HEK293 (cell line): ENCODE measurements at regions of chr15 and their contacts with region 1.

Region 1: GRCh38 chr15:79923515-79924395 is 26.9 kb upstream of the MTHFS start:
- H3K4me3 ChIP-seq: peak overlapping the region; percentile 99
- H3K27ac ChIP-seq: peak overlapping the region; percentile 97
- H3K4me1 ChIP-seq: no peaks in the 10 kb centered on the region
- CTCF ChIP-seq: no peak

Region 2: DNA sequence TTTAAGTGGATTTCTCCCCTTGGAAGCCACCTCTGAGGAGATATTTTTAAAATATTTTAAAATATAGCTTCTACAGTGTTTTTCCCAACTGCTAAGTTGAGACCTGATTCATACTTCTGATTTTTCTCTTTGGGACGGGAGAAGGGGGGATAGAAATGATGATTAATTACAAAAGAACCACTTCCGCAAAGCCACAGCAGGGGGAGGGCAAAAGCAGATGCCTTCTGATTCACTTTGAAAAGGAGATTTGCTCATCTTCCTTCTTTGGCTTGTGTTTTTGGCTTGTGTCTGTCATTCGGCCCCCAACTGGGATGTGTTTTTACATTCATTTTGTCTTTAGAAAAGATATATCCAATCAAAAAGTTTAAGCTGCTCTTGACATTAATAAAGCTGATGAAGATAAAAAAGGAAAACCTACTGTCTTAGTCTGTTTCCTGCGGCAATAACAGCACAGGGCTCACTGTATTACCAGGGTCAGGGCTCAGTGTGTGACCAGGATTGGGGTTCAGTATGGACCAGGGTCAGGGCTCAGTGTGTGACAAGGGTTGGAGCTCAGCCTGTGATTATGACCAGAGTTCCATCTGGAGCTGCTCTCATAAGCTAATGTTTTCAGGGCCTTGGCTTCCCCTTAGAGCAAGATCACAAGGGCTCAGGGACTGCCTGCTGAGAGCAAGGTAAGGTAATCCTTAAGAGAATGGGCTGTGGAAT is 250.2 kb before region 1 on chr15:
- CTCF ChIA-PET with region 1: no interaction called
- POLR2A ChIA-PET with region 1: no interaction called
- H3K4me3 ChIP-seq: no peak overlapping the region
- H3K27ac ChIP-seq: no peak overlapping the region
- H3K4me1 ChIP-seq: no peaks in the 10 kb centered on the region
- CTCF ChIP-seq: no peak

Region 3: DNA sequence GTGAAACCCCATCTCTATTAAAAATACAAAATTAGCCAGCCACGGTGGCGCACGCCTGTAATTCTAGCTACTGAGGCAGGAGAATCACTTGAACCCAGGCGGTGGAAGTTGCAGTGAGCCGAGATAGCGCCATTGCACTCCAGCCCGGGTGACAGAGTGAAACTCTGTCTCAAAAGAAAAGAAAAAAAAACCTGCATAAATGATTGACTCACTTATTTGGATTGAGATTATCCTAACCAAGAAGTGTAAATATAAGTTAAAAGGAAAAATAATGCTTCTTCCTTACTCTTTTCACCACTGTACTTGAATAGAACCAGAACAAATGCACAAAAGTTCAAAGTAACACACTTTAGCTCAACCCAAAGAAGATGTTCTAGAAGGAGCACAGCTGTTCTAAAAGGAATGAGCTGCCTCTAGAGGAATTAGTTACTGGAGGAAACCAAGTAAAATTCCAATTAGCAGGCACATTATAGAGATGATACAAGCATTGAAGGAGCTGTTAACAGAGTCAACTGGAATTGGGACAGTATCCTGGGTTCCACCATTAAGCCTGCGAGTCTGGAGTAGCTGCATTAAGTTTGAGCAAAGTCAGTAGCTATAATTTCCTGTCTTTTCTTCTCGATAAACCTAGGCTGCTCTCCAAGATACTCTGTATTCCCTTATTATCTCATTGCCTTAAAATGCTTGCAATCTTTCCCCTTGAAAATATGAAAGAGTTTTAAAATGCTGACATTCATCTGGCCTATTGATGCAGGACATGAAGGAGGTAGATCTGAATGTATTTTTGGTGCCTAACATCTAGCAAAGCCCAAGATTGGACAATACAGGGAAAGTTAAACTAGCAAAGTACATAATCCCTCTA is 36.5 kb before region 1 on chr15:
- CTCF ChIA-PET with region 1: interaction called, 3 read pairs
- POLR2A ChIA-PET with region 1: interaction called, 10 read pairs
- H3K4me3 ChIP-seq: no peak overlapping the region
- H3K27ac ChIP-seq: no peak overlapping the region
- H3K4me1 ChIP-seq: peaks cover 3% of the 10 kb centered on the region; the same call in 1 of the 2 replicates
- CTCF ChIP-seq: no peak

Region 4: GRCh38 chr15:79896637-79897379 is 26.9 kb before region 1 on chr15 and contains the start of gene MTHFS:
- CTCF ChIA-PET with region 1: interaction called, 3 read pairs
- POLR2A ChIA-PET with region 1: interaction called, 51 read pairs
- H3K4me3 ChIP-seq: peak within 1 kb of the TSS; percentile 91
- H3K27ac ChIP-seq: peak within 1 kb of the TSS; percentile 97
- H3K4me1 ChIP-seq: peaks cover 3% of the 10 kb centered on the region; the same call in 1 of the 2 replicates
- CTCF ChIP-seq: peak; percentile 85

Region 5: GRCh38 chr15:80058851-80059785 is 135.4 kb after region 1 on chr15 and contains the start of gene ZFAND6:
- CTCF ChIA-PET with region 1: no interaction called
- POLR2A ChIA-PET with region 1: interaction called, 21 read pairs
- H3K4me3 ChIP-seq: peak within 1 kb of the TSS; percentile 80
- H3K27ac ChIP-seq: peak within 1 kb of the TSS; percentile 98
- H3K4me1 ChIP-seq: peaks cover 17% of the 10 kb centered on the region
- CTCF ChIP-seq: peak; percentile 15; the same call in 1 of the 2 replicates